Panc1 (cell line): ENCODE measurements at regions of chr15 and their contacts with region 1.

Region 1: GRCh38 chr15:40323239-40323952 is at the start of gene INAFM2:
- DNase-seq: no peak
- ATAC-seq: peak; percentile 91
- H3K4me3 ChIP-seq: peak within 1 kb of the TSS; percentile 55 to 63
- H3K27ac ChIP-seq: no peak within 1 kb of the TSS
- H3K4me1 ChIP-seq: peaks cover 25% of the 10 kb centered on the region
- H3K27me3 ChIP-seq: no peaks in the 10 kb centered on the region
- CTCF ChIP-seq: peak; percentile 51; the same call in 1 of the 2 replicates
- total RNA-seq, gene INAFM2: 10.4 TPM

Region 2: GRCh38 chr15:40301467-40302179 is 21.8 kb before region 1 on chr15:
- CTCF ChIA-PET with region 1: no interaction called
- POLR2A ChIA-PET with region 1: no interaction called
- in situ Hi-C with region 1: no loop called
- intact Hi-C with region 1: no loop called
- DNase-seq: no peak
- ATAC-seq: 0 out of 2 replicates have a peak, but pooled peaks have one; percentile 18
- H3K4me3 ChIP-seq: no peak overlapping the region
- H3K27ac ChIP-seq: no peak overlapping the region
- H3K4me1 ChIP-seq: no peaks in the 10 kb centered on the region
- H3K27me3 ChIP-seq: no peaks in the 10 kb centered on the region
- CTCF ChIP-seq: no peak

Region 3: GRCh38 chr15:40338041-40338657 is 14.8 kb after region 1 on chr15:
- CTCF ChIA-PET with region 1: interaction called, 30 read pairs
- POLR2A ChIA-PET with region 1: interaction called, 4 read pairs
- in situ Hi-C with region 1: no loop called
- intact Hi-C with region 1: no loop called
- DNase-seq: no peak
- ATAC-seq: peak; percentile 47
- H3K4me3 ChIP-seq: peak overlapping the region in 1 of 2 experiments; percentile 61; a peak in 2 of 4 replicates
- H3K27ac ChIP-seq: peak overlapping the region; percentile 94
- H3K4me1 ChIP-seq: peaks cover 54% of the 10 kb centered on the region
- H3K27me3 ChIP-seq: no peaks in the 10 kb centered on the region
- CTCF ChIP-seq: peak; percentile 96

Region 4: GRCh38 chr15:40354408-40355171 is 31.2 kb after region 1 on chr15:
- CTCF ChIA-PET with region 1: no interaction called
- POLR2A ChIA-PET with region 1: no interaction called
- in situ Hi-C with region 1: no loop called
- intact Hi-C with region 1: no loop called
- DNase-seq: no peak
- ATAC-seq: peak; percentile 44; the same call in 1 of the 2 replicates
- H3K4me3 ChIP-seq: no peak overlapping the region
- H3K27ac ChIP-seq: no peak overlapping the region; the same call in 1 of the 2 replicates
- H3K4me1 ChIP-seq: peaks cover 7% of the 10 kb centered on the region
- H3K27me3 ChIP-seq: no peaks in the 10 kb centered on the region
- CTCF ChIP-seq: peak; percentile 72; the same call in 1 of the 2 replicates